ENCODE measurements at regions of chr17 and their contacts with region 1.

Region 1: DNA sequence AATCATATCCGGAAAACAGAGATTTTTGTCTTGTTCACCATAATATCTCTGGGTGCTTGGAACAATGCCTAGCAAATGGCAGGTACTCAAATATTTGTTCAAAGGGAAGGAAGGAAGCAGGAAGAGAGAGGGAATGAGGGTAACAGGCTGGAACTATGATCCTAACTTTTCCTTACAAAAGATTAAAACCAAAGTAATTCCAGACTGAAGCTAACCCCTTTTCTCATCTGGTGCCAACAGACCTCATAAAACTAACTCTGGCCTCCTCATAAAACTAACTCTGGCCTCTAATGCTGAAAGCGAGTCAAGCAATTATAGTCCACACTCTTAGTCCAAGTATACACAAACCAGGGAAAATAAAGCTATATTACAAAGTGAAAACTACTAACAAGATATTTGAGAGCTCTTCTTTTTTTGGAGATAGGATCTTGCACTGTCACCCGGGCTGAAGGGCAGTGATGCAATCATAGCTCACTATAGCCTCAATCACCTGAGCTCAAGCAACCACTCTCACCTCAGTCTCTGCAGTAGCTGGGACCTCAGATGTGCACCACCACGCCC is 84.6 kb downstream of the KANSL1 start:
- DNase-seq: no peak
- H3K4me3 ChIP-seq: no peak overlapping the region
- H3K27ac ChIP-seq: no peak overlapping the region
- H3K4me1 ChIP-seq: peaks cover 20% of the 10 kb centered on the region
- H3K27me3 ChIP-seq: no peaks in the 10 kb centered on the region
- CTCF ChIP-seq: no peak
- EP300 ChIP-seq: no peak
- POLR2A ChIP-seq: no peak

Region 2: GRCh38 chr17:45948881-45949624 is 159.6 kb before region 1 on chr17:
- intact Hi-C with region 1: no loop called
- DNase-seq: peak; percentile 49 to 78 (median 60)
- H3K4me3 ChIP-seq: no peak overlapping the region
- H3K27ac ChIP-seq: no peak overlapping the region
- H3K4me1 ChIP-seq: peaks cover 2% of the 10 kb centered on the region
- H3K27me3 ChIP-seq: no peaks in the 10 kb centered on the region
- CTCF ChIP-seq: peak; percentile 33 to 50 (median 49)
- EP300 ChIP-seq: no peak
- POLR2A ChIP-seq: no peak

Region 3: DNA sequence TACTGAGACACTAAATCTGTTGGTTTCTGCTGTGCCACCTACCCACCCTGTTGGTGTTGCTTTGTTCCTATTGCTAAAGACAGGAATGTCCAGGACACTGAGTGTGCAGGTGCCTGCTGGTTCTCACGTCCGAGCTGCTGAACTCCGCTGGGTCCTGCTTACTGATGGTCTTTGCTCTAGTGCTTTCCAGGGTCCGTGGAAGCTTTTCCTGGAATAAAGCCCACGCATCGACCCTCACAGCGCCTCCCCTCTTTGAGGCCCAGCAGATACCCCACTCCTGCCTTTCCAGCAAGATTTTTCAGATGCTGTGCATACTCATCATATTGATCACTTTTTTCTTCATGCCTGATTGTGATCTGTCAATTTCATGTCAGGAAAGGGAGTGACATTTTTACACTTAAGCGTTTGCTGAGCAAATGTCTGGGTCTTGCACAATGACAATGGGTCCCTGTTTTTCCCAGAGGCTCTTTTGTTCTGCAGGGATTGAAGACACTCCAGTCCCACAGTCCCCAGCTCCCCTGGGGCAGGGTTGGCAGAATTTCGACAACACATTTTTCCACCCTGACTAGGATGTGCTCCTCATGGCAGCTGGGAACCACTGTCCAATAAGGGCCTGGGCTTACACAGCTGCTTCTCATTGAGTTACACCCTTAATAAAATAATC is 95.0 kb before region 1 on chr17:
- intact Hi-C with region 1: no loop called
- DNase-seq: no peak
- H3K4me3 ChIP-seq: no peak overlapping the region
- H3K27ac ChIP-seq: no peak overlapping the region
- H3K4me1 ChIP-seq: no peaks in the 10 kb centered on the region
- H3K27me3 ChIP-seq: no peaks in the 10 kb centered on the region
- CTCF ChIP-seq: no peak
- EP300 ChIP-seq: no peak
- POLR2A ChIP-seq: no peak

Region 4: GRCh38 chr17:46089389-46089965 is 19.2 kb before region 1 on chr17:
- intact Hi-C with region 1: no loop called
- DNase-seq: no peak
- H3K4me3 ChIP-seq: no peak overlapping the region
- H3K27ac ChIP-seq: no peak overlapping the region
- H3K4me1 ChIP-seq: peaks cover 6% of the 10 kb centered on the region
- H3K27me3 ChIP-seq: no peaks in the 10 kb centered on the region
- CTCF ChIP-seq: no peak
- EP300 ChIP-seq: no peak
- POLR2A ChIP-seq: no peak

Region 5: DNA sequence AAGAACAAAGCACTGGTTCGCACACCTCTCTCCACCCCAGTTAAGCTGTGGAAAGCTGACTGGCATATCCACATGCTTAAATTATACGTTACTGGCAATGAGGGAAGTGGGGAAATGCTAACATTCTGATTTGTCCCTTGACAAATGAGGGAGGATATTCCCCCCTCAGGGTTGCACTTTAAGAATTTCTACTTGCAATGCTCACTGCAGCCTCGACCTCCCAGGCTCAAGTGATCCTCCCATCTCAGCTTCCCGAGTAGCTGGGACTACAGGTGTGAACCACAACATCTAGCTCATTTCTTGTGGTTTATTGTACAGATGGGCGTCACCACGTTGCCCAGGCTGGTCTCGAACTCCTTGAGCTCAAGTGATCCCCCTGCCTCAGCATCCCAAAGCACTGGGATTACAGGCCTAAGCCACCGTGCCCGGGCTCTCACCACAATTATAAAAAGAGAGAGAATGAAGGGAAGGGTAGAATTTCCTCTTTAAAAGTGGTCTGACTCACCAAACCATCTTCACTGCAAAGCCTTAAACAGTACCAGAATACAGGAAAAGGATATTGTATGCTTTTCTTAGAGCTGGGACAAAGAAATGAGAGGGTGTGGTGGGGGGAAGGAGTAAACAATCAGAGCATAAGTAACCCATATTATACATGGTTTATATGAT is 45.7 kb after region 1 on chr17:
- intact Hi-C with region 1: loop called in 1 of 4 experiments (anchors 10 kb)
- DNase-seq: no peak
- H3K4me3 ChIP-seq: no peak overlapping the region
- H3K27ac ChIP-seq: no peak overlapping the region
- H3K4me1 ChIP-seq: peaks cover 20% of the 10 kb centered on the region
- H3K27me3 ChIP-seq: no peaks in the 10 kb centered on the region
- CTCF ChIP-seq: no peak
- EP300 ChIP-seq: no peak
- POLR2A ChIP-seq: no peak

Measured in ovary (tissue), 10 donors.